CD8-positive, alpha-beta T cell (primary cell): ENCODE measurements at regions of chr2 and their contacts with region 1.

Region 1: DNA sequence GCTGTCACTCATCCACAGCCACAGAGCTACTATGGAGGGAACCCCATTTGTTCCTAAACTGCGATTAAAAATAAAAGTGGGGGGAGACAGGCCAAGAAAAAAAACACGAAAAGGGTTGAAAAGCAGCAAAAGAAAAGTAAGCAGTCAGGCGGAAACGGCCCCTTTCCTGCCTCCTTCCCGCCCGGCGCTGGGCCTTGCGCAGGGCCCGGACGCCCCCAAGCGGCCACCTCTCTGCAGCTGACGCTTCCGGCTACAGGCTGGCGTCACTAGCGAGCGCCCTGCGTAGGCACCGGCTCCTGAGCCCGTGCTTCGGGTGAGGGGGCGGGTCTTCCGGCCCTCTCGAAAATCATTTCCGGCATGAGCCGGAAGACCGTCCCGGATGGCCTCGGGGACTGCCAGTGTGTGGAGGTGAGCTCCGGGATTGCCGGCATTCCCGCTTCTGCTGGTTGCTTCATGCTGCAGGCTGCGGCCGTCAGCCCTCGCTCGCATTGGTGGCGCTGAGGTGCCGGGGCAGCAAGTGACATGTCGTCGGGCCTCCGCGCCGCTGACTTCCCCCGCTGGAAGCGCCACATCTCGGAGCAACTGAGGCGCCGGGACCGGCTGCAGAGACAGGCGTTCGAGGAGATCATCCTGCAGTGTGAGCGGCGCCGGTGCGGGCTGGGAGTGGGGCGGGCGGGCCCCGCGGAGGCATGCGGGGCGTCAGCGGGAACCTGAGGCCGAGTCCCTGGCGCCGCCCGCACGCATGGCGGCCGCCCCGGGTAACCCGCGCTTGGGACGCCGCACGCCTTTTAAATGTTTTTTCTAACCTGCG is at the start of gene ATG16L1:
- DNase-seq: peak; percentile 89 to 98 (median 95)
- ATAC-seq: peak; percentile 94
- H3K4me3 ChIP-seq: peak within 1 kb of the TSS; percentile 85 to 92
- H3K4me3 Mint-ChIP-seq: peak within 1 kb of the TSS; percentile 90
- H3K27ac ChIP-seq: peak within 1 kb of the TSS; percentile 82 to 97
- H3K27ac Mint-ChIP-seq: peak within 1 kb of the TSS; percentile 96
- H3K4me1 ChIP-seq: peaks cover 59% of the 10 kb centered on the region
- H3K4me1 Mint-ChIP-seq: peaks cover 71% of the 10 kb centered on the region
- H3K27me3 ChIP-seq: no peaks in the 10 kb centered on the region
- H3K27me3 Mint-ChIP-seq: no peaks in the 10 kb centered on the region
- CTCF ChIP-seq: peak; percentile 93
- total RNA-seq, gene ATG16L1: 156 to 164 TPM

Region 2: DNA sequence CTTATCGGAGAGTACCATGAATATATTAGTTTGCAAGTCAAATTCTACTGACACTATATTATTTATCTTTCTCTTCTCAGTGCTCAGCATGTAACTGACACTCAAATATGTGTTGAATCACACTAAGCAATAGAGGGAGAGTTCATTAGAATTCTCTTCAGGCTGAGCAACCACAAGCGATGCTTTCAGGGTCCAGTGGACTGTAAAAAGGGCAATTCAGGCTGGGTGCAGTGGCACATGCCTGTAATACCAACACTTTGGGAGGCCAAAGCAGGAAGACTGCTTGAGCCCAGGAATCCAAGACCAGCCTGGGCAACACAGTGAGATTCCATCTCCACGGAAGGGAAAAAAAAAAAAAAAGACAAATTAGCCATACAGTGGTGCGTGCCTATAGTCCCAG is 1486.8 kb before region 1 on chr2:
- CTCF ChIA-PET with region 1: no interaction called
- POLR2A ChIA-PET with region 1: no interaction called
- intact Hi-C with region 1: no loop called
- DNase-seq: no peak
- ATAC-seq: no peak
- H3K4me3 ChIP-seq: no peak overlapping the region
- H3K4me3 Mint-ChIP-seq: no peak overlapping the region
- H3K27ac ChIP-seq: no peak overlapping the region
- H3K27ac Mint-ChIP-seq: no peak overlapping the region
- H3K4me1 ChIP-seq: peaks cover 5% of the 10 kb centered on the region
- H3K4me1 Mint-ChIP-seq: peaks cover 18% of the 10 kb centered on the region
- H3K27me3 ChIP-seq: no peaks in the 10 kb centered on the region
- H3K27me3 Mint-ChIP-seq: no peaks in the 10 kb centered on the region
- CTCF ChIP-seq: no peak

Region 3: GRCh38 chr2:231780909-231781797 is 1470.4 kb before region 1 on chr2 and contains the start of gene PDE6D:
- CTCF ChIA-PET with region 1: no interaction called
- POLR2A ChIA-PET with region 1: no interaction called
- intact Hi-C with region 1: loop called in 1 of 2 experiments (anchors 5 kb)
- DNase-seq: peak; percentile 90 to 99 (median 95)
- ATAC-seq: peak; percentile 89
- H3K4me3 ChIP-seq: peak within 1 kb of the TSS; percentile 78 to 97
- H3K4me3 Mint-ChIP-seq: peak within 1 kb of the TSS; percentile 99
- H3K27ac ChIP-seq: peak within 1 kb of the TSS; percentile 53 to 89
- H3K27ac Mint-ChIP-seq: peak within 1 kb of the TSS; percentile 96
- H3K4me1 ChIP-seq: peaks cover 44% of the 10 kb centered on the region
- H3K4me1 Mint-ChIP-seq: peaks cover 71% of the 10 kb centered on the region
- H3K27me3 ChIP-seq: no peaks in the 10 kb centered on the region
- H3K27me3 Mint-ChIP-seq: no peaks in the 10 kb centered on the region
- CTCF ChIP-seq: no peak
- total RNA-seq, gene PDE6D: 4.7 to 5.6 TPM

Region 4: DNA sequence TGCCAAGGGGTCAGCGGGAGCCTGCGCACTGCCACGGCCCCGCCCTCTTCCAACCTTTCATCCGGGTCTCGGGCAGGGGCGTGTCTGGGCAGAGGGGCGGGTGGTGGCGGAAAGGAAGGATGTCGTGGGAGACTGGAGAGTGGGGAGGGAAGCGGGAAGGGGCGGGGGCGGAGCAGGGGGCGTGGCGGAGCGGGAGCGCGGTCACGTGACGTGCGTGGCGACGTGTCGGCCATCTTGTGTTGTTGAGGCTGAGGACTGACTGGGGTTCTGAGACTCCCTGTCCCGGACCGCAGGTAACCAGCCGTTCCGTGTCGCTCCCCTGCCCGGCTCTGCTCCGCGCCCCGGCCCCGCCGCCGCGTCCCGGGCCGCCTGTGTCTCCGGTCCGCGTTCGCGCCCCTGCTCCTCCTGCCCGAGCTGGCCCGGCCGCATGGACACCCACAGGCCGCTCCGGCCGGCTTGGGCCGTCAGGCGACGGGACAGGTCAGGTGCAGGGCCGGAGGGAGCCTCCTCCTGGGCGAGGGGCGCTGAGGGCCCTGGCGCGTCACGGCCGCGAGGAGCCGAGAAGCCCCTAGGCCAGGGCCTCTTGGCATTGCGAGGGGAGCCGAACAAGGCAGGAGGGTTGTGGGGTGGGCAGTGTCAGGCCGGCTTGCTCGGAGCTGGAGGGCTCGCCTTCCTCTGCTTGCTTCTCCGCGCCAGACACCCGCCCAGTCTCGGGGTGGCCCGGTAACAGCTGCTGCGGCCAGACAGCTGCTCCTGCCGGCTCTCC is 554.2 kb before region 1 on chr2 and contains the start of gene GIGYF2:
- CTCF ChIA-PET with region 1: no interaction called
- POLR2A ChIA-PET with region 1: no interaction called
- intact Hi-C with region 1: loop called (anchors 1 to 2 kb)
- DNase-seq: peak; percentile 78 to 95 (median 91)
- ATAC-seq: peak; percentile 83
- H3K4me3 ChIP-seq: peak within 1 kb of the TSS; percentile 89 to 92
- H3K4me3 Mint-ChIP-seq: peak within 1 kb of the TSS; percentile 94
- H3K27ac ChIP-seq: peak within 1 kb of the TSS; percentile 74 to 75
- H3K27ac Mint-ChIP-seq: peak within 1 kb of the TSS; percentile 89
- H3K4me1 ChIP-seq: peaks cover 41% of the 10 kb centered on the region
- H3K4me1 Mint-ChIP-seq: peaks cover 37% of the 10 kb centered on the region
- H3K27me3 ChIP-seq: no peaks in the 10 kb centered on the region
- H3K27me3 Mint-ChIP-seq: no peaks in the 10 kb centered on the region
- CTCF ChIP-seq: no peak
- total RNA-seq, gene GIGYF2: 40.5 to 52.2 TPM

Region 5: DNA sequence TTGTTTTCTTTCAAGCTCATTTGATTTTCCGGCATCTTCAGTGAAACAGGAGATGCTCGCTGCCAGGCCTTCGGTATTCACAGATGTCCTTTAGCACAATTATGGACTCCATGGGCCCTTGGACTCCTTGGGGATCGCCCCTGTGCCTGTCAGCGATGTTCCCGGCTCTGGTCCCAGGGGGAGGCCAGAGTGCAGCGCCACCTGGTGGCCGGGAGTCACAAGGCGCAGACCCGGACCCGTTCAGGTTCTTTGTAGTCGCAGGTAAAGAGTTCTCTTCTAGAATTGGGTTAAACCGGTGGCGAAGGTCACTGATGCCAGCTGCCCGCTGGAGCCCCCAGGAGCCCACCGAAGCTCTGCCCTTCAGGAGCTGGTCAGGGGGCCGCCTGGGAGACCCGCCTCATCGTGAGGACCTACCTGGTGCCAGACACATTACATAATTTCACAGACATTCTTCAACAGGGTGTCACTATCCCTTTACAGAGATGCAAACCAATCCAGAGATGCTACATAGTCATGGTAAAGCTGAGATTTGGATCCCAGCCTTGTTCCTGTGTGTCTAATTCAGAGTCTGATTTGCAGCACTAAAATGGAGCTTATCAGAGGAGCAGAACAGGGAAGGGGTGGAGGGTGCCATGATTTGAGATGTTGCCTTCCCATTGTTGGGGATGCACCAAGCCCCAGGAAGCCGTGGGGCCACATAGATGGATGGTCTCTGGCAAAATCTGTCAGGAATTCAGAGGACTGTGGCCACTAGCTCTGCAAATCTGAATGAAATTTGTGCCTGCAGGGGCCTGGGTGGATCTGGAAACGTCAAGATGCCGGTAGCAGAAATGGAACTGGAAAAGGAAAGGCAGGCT is 197.4 kb before region 1 on chr2:
- CTCF ChIA-PET with region 1: interaction called, 6 read pairs
- POLR2A ChIA-PET with region 1: interaction called, 3 read pairs
- intact Hi-C with region 1: loop called in 1 of 2 experiments (anchors 1 kb)
- DNase-seq: peak; percentile 37 to 84 (median 76)
- ATAC-seq: peak; percentile 78
- H3K4me3 ChIP-seq: no peak overlapping the region
- H3K4me3 Mint-ChIP-seq: no peak overlapping the region
- H3K27ac ChIP-seq: no peak overlapping the region
- H3K27ac Mint-ChIP-seq: no peak overlapping the region
- H3K4me1 ChIP-seq: peaks cover 12% of the 10 kb centered on the region
- H3K4me1 Mint-ChIP-seq: peaks cover 19% of the 10 kb centered on the region
- H3K27me3 ChIP-seq: peaks cover 0 to 3% of the 10 kb centered on the region in 2 experiments
- H3K27me3 Mint-ChIP-seq: no peaks in the 10 kb centered on the region
- CTCF ChIP-seq: peak; percentile 97

Region 6: DNA sequence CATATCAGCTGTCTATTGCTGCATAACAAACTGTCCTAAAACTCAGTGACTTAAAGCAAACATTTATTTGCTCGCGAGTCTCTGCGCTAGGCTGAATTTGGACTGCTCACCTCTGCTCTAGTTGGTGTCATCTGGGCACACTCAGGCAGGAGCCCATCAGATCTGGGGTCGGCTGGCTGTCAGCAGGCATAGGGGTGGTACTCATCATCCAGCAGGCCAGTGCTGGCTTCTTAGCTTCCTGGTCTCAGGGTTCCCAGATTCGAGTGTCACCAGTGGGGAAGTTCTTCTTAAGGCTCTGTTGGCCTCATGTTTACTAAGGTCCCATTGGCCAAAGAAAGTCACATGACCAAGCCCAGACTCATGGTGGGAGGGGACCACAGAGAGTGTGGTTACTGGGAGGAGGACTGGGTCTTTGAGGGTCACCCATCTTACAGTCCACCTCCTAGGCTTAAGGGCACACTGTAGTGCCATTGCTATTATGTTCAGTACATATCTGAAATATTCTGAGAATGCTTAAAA is 71.6 kb before region 1 on chr2:
- CTCF ChIA-PET with region 1: no interaction called
- POLR2A ChIA-PET with region 1: no interaction called
- intact Hi-C with region 1: loop called (anchors 5 kb)
- DNase-seq: peak in 1 of 9 experiments; percentile 33
- ATAC-seq: no peak
- H3K4me3 ChIP-seq: no peak overlapping the region
- H3K4me3 Mint-ChIP-seq: no peak overlapping the region
- H3K27ac ChIP-seq: no peak overlapping the region
- H3K27ac Mint-ChIP-seq: peak overlapping the region; percentile 64
- H3K4me1 ChIP-seq: no peaks in the 10 kb centered on the region
- H3K4me1 Mint-ChIP-seq: no peaks in the 10 kb centered on the region
- H3K27me3 ChIP-seq: no peaks in the 10 kb centered on the region
- H3K27me3 Mint-ChIP-seq: no peaks in the 10 kb centered on the region
- CTCF ChIP-seq: no peak

Region 7: DNA sequence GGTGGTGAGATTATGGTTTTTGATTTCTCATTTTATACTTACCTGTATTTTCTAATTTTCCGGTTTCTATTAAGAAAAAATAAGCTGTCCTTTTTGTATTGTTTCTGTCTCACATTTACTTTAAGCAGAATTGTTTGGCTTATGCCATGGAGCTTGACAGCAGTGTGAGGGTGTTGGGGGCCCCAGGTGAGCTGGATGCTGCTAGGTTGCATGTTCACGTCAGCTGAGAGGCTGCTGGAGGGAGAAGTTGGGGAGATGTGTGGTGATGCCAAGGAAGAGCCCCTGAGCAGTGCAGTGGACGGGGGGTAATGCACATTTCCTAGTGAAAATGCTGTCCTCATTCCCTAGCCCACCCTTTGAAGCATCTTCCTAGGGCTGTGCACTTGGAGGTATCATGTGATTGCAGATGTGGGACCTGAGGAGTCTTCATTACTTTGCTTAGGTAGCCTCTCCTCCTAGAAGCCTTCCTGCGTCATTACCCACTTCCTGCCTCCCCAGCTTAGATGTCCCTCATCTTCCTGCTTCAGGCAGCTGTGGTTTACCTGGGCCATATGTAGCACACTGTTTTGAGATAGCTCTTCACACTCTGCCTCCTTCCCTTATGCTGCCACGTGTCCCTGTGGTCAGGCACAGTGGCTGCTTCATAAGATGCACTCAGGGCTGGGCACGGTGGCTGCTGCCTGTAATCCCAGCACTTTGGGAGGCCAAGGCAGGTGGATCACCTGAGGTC is 16.2 kb after region 1 on chr2:
- CTCF ChIA-PET with region 1: interaction called, 20 read pairs
- POLR2A ChIA-PET with region 1: interaction called, 35 read pairs
- intact Hi-C with region 1: loop called (anchors 1 kb)
- DNase-seq: peak; percentile 68 to 98 (median 84)
- ATAC-seq: peak; percentile 89
- H3K4me3 ChIP-seq: peak overlapping the region in 1 of 2 experiments; percentile 2
- H3K4me3 Mint-ChIP-seq: peak overlapping the region; percentile 68
- H3K27ac ChIP-seq: peak overlapping the region; percentile 62 to 95
- H3K27ac Mint-ChIP-seq: peak overlapping the region; percentile 94
- H3K4me1 ChIP-seq: peaks cover 59% of the 10 kb centered on the region
- H3K4me1 Mint-ChIP-seq: peaks cover 75% of the 10 kb centered on the region
- H3K27me3 ChIP-seq: no peaks in the 10 kb centered on the region
- H3K27me3 Mint-ChIP-seq: no peaks in the 10 kb centered on the region
- CTCF ChIP-seq: no peak